CD14-positive monocyte (primary cell): ENCODE measurements at regions of chrX and their contacts with region 1.

Region 1: DNA sequence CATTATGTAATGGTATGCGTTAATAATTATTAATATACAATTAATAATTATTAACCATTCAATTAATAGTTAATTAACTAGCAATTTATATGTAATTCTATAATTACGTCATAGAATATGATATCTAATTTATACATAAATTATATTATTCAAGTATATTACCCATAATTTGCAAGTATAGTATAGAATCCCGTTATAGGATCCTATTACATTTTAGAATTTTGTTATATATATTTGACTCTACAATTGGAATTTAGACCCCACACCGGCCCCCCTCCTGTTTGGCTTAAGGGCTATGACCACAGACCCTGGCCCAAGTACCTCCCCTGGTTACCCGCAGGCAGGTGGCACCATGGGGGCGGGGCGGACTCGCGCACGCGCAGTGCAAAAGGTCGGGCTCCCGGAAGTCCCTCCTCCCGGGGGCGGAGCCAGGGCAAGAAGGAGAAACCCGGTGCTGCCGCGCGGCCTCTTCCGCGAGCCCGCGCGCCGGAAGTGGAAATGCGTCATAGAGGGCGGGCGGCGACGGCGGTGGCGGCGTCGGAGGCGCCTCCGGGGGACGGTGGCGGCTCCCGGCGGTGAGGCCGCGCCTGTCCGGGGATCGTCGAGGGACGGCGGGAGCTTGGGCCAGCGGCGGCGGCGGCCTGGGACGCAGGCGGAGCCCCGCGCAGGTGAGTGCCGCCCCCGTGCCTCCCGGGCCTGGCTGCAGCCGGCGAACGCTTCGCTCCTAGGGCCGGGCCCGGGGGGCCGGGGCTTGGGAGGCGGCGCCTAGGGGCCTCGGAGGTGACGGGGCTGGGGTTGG is at the start of gene AKAP17A:
- DNase-seq: peak; percentile 88 to 94 (median 93)
- H3K4me3 ChIP-seq: peak within 1 kb of the TSS; percentile 71 to 97 (median 94)
- H3K4me3 Mint-ChIP-seq: peak within 1 kb of the TSS; percentile 95 to 97
- H3K27ac ChIP-seq: peak within 1 kb of the TSS; percentile 72 to 89
- H3K27ac Mint-ChIP-seq: peak within 1 kb of the TSS; percentile 92 to 98 (median 94)
- H3K4me1 ChIP-seq: peaks cover 21 to 27% of the 10 kb centered on the region in 2 donors
- H3K4me1 Mint-ChIP-seq: peaks cover 23% of the 10 kb centered on the region
- H3K27me3 ChIP-seq: no peaks in the 10 kb centered on the region
- H3K27me3 Mint-ChIP-seq: no peaks in the 10 kb centered on the region
- CTCF ChIP-seq: no peak
- polyA plus RNA-seq, gene AKAP17A: 8.9 to 118 (median 13.6) TPM

Region 2: GRCh38 chrX:1391707-1392375 is 199.5 kb before region 1 on chrX and contains the start of gene SLC25A6:
- intact Hi-C with region 1: loop called in 1 of 2 experiments (anchors 10 kb)
- DNase-seq: peak; percentile 97 to 98 (median 98)
- H3K4me3 ChIP-seq: peak within 1 kb of the TSS; percentile 76 to 98 (median 93)
- H3K4me3 Mint-ChIP-seq: peak within 1 kb of the TSS; percentile 89 to 90
- H3K27ac ChIP-seq: peak within 1 kb of the TSS; percentile 95
- H3K27ac Mint-ChIP-seq: peak within 1 kb of the TSS; percentile 93 to 97 (median 96)
- H3K4me1 ChIP-seq: peaks cover 17 to 34% of the 10 kb centered on the region in 2 donors
- H3K4me1 Mint-ChIP-seq: peaks cover 22% of the 10 kb centered on the region
- H3K27me3 ChIP-seq: no peaks in the 10 kb centered on the region
- H3K27me3 Mint-ChIP-seq: peaks cover 0 to 2% (median 0%) of the 10 kb centered on the region in 3 donors
- CTCF ChIP-seq: peak; percentile 30
- polyA plus RNA-seq, gene SLC25A6: 442 to 769 (median 449) TPM

Region 3: GRCh38 chrX:1657367-1658070 is 66.2 kb after region 1 on chrX:
- intact Hi-C with region 1: loop called in 1 of 2 experiments (anchors 5 kb)
- DNase-seq: peak; percentile 33 to 72 (median 39)
- H3K4me3 ChIP-seq: no peak overlapping the region
- H3K4me3 Mint-ChIP-seq: peak overlapping the region; percentile 59 to 72
- H3K27ac ChIP-seq: peak overlapping the region; percentile 36 to 46
- H3K27ac Mint-ChIP-seq: peak overlapping the region in 6 of 7 donors; percentile 38 to 84 (median 68)
- H3K4me1 ChIP-seq: peaks cover 20 to 31% of the 10 kb centered on the region in 2 donors
- H3K4me1 Mint-ChIP-seq: peaks cover 19% of the 10 kb centered on the region
- H3K27me3 ChIP-seq: no peaks in the 10 kb centered on the region
- H3K27me3 Mint-ChIP-seq: no peaks in the 10 kb centered on the region
- CTCF ChIP-seq: no peak